Activated CD8-positive, alpha-beta T cell treated with anti-CD3 and anti-CD28 coated beads, Interleukin-2, amount 10 ng/mL, durations not matched to agents 7 days and 5 days (primary cell): ENCODE measurements at regions of chr4 and their contacts with region 1.

Region 1: DNA sequence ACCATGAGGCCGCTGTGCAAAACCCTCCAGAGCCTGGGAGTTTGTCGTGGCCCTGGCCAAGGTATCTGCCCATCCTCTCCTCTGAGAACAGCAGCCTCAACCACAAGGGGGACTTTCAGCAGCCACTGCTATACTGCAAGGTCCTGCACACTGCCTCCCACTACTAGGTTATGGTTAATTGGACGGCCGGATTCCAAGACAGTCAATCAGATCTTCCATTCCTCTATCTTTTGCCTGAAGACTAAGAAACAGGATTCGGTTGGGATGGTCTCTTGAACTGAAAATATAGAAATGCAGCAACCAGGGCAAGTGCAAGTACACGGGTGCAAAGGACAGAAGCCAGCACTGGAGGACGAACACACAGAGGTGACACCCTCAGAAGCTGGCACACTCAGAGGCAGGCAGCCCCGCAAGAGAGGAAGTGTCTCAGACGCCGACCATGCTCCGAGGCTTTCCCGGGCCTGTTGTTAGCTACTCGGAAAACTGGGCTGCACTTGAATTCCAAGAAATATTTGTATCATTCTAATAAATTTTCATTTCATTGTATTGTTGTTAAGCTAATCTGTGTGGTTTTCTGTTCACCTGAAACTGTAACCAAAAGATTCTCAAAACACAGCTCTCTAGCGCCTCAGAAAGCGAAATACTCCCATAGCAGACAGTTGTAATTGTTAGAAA is 63.3 kb downstream of the AFAP1 start:
- DNase-seq: peak; percentile 45
- ATAC-seq: peak; percentile 85
- H3K4me3 Mint-ChIP-seq: peak overlapping the region; percentile 32
- H3K27ac Mint-ChIP-seq: peak overlapping the region; percentile 63
- H3K4me1 Mint-ChIP-seq: peaks cover 31% of the 10 kb centered on the region
- H3K27me3 Mint-ChIP-seq: no peaks in the 10 kb centered on the region

Region 2: GRCh38 chr4:7909463-7910262 is 33.3 kb after region 1 on chr4:
- CTCF ChIA-PET with region 1: interaction called, 10 read pairs
- POLR2A ChIA-PET with region 1: no interaction called
- DNase-seq: no peak
- ATAC-seq: no peak
- H3K4me3 Mint-ChIP-seq: no peak overlapping the region
- H3K27ac Mint-ChIP-seq: no peak overlapping the region
- H3K4me1 Mint-ChIP-seq: peaks cover 10% of the 10 kb centered on the region
- H3K27me3 Mint-ChIP-seq: peaks cover 7% of the 10 kb centered on the region

Region 3: GRCh38 chr4:7929118-7929951 is 53.0 kb after region 1 on chr4:
- CTCF ChIA-PET with region 1: no interaction called
- POLR2A ChIA-PET with region 1: no interaction called
- DNase-seq: no peak
- ATAC-seq: no peak
- H3K4me3 Mint-ChIP-seq: no peak overlapping the region
- H3K27ac Mint-ChIP-seq: no peak overlapping the region
- H3K4me1 Mint-ChIP-seq: no peaks in the 10 kb centered on the region
- H3K27me3 Mint-ChIP-seq: no peaks in the 10 kb centered on the region

Region 4: DNA sequence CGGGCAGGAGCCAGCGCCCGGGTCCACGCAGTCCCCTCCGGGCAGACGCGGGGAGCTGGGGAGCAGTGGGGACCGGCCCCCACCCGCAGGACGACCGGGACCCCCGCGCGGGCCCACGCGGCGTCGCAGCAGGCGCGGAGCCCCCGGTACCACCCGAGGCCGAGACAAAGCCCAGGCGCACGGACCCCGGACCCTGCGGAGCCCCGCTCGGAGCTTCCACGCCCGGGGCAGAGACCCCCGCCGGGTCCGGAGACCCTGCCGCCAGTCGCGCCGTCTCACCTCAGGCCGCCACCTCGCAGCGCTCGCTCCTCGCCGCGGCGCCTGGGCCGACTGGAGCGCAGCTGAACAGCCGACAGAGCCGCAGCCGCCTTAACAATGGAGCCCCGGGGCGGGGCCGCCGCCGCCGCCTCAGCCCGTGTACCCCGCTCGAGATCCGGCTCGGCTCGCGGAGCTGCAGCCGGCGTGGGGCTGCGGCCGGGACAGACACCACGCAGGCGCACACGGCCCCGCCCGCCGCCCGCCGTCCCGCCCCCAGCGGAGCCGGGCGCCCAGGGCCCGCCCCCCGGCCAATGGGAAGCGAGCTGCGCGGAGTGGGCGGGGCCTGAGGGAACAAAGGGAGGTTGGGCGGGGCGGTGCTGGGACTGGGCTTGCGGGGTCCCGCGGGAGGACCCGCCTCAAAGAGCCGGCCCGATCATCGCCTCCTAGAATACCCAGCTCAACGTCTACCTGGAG is 63.2 kb after region 1 on chr4 and contains the start of gene AFAP1:
- CTCF ChIA-PET with region 1: interaction called, 17 read pairs
- POLR2A ChIA-PET with region 1: no interaction called
- DNase-seq: peak; percentile 86
- ATAC-seq: peak; percentile 97
- H3K4me3 Mint-ChIP-seq: peak within 1 kb of the TSS; percentile 63
- H3K27ac Mint-ChIP-seq: no peak within 1 kb of the TSS
- H3K4me1 Mint-ChIP-seq: peaks cover 20% of the 10 kb centered on the region
- H3K27me3 Mint-ChIP-seq: peaks cover 27% of the 10 kb centered on the region
- total RNA-seq, gene AFAP1: 5.3 to 6.2 TPM

Region 5: GRCh38 chr4:7987148-7987989 is 111.0 kb after region 1 on chr4:
- CTCF ChIA-PET with region 1: interaction called, 17 read pairs
- POLR2A ChIA-PET with region 1: no interaction called
- DNase-seq: peak; percentile 85
- ATAC-seq: peak; percentile 90
- H3K4me3 Mint-ChIP-seq: no peak overlapping the region
- H3K27ac Mint-ChIP-seq: no peak overlapping the region
- H3K4me1 Mint-ChIP-seq: peaks cover 10% of the 10 kb centered on the region
- H3K27me3 Mint-ChIP-seq: peaks cover 2% of the 10 kb centered on the region